A673 (cell line): ENCODE measurements at regions of chr4 and their contacts with region 1.

Region 1: DNA sequence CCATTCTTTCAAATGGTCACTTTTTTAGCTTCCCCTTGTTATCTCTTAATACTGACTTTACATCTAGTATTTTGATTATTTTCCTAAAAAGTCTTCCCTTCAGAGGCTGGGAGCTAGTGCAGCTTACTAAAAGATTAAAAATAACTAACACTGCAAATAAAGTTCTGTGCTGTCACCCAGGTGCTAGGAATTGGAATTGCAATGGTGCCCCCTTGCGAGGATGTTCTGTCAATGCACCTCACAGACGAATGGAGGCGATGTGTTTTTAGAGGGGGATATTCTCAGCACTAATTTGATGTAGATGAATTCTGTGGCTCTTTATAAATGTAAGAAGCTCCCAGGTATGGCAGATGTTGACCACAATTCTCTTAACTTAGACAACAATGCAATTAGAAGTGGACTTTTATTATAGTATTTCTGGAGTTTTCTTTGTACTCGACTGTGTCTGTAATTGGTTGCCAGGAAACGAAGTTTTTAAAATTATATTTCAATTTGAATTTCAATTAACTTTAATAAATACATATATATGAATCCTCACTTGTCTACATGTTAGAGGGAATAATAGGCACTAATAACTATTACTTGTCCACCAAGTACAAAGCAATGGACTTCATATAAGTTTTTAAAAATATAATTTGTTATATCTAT is 22.0 kb upstream of the SMIM31 start:
- DNase-seq: peak; percentile 85
- H3K4me3 ChIP-seq: no peak overlapping the region
- H3K27ac ChIP-seq: peak overlapping the region; percentile 34
- H3K4me1 ChIP-seq: peaks cover 25% of the 10 kb centered on the region
- H3K27me3 ChIP-seq: no peaks in the 10 kb centered on the region
- CTCF ChIP-seq: peak; percentile 93

Region 2: DNA sequence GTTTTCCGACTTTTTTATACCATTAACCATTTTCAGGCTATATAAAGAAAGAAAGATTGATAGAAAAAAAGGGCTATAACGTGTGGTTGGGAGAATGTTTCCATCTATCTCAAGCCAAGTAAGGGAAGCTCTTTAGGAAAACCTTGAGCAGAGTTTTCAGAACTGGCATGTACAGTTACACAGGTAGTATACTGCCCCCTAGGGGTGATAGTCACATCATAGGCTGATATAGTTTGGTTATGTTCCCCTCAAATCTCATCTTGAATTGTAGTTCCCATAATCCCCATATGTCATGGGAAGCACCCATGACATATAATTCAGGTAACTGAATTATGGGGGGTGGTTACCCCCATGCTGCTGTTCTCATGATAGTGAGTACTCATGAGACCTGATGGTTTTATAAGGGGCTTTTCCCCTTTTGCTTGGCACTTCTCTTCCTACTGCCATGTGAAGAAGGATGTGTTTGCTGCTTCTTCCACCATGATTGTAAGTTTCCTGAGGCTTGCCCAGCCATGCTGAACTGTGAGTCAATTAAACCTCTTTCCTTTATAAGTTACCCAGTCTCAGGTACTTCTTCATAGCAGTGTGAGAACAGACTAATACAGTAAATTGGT is 1050.6 kb before region 1 on chr4:
- CTCF ChIA-PET with region 1: no interaction called
- POLR2A ChIA-PET with region 1: no interaction called
- intact Hi-C with region 1: loop called (anchors 10 kb)
- DNase-seq: peak; percentile 70
- H3K4me3 ChIP-seq: no peak overlapping the region
- H3K27ac ChIP-seq: no peak overlapping the region
- H3K4me1 ChIP-seq: no peaks in the 10 kb centered on the region
- H3K27me3 ChIP-seq: no peaks in the 10 kb centered on the region
- CTCF ChIP-seq: peak; percentile 69

Region 3: DNA sequence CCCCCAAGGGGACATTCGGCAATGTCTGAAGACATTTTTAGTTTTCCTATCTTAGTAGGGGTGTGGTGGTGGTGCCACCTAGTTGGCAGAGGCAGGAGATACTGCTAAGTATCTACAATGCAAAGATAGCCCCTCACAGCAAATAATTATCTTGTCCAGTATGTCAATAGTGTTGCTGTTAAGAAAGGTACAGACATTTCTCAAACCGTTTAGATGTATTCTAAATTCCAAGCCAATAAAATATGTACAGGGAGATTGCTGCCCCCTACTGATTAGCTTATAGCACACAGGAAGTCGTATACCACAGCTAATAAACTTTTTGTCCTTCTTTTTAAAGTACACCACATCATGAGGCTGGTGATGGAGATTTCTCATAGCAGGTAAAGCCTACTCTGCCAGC is 976.9 kb before region 1 on chr4:
- CTCF ChIA-PET with region 1: interaction called, 6 read pairs
- POLR2A ChIA-PET with region 1: no interaction called
- intact Hi-C with region 1: loop called (anchors 10 kb)
- DNase-seq: peak; percentile 81
- H3K4me3 ChIP-seq: no peak overlapping the region
- H3K27ac ChIP-seq: no peak overlapping the region
- H3K4me1 ChIP-seq: peaks cover 11% of the 10 kb centered on the region
- H3K27me3 ChIP-seq: no peaks in the 10 kb centered on the region
- CTCF ChIP-seq: peak; percentile 70

Region 4: GRCh38 chr4:164012396-164013027 is 719.4 kb before region 1 on chr4:
- CTCF ChIA-PET with region 1: no interaction called
- POLR2A ChIA-PET with region 1: no interaction called
- intact Hi-C with region 1: loop called (anchors 5 kb)
- DNase-seq: peak; percentile 82
- H3K4me3 ChIP-seq: no peak overlapping the region
- H3K27ac ChIP-seq: peak overlapping the region; percentile 8
- H3K4me1 ChIP-seq: peaks cover 7% of the 10 kb centered on the region
- H3K27me3 ChIP-seq: no peaks in the 10 kb centered on the region
- CTCF ChIP-seq: peak; percentile 82

Region 5: DNA sequence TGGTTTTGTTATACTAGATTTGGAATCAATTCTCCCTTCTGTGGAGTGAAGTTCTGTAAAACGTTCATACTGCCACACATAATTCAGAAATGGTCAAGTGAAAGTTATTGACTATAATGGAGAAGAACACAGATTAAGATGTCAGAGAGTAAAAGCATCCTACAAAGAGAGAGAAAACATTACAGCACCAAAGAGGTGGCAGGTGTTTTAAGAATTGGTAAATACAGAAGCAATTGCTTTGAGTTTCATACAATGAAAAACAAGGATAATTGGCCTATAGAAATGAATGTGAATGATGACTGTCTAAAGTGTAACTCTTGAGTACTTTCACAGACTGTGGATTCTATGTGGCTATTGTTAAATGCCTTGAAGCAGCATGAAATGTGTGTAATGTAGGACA is 413.6 kb before region 1 on chr4:
- CTCF ChIA-PET with region 1: interaction called, 3 read pairs
- POLR2A ChIA-PET with region 1: no interaction called
- intact Hi-C with region 1: loop called (anchors 5 kb)
- DNase-seq: no peak
- H3K4me3 ChIP-seq: no peak overlapping the region
- H3K27ac ChIP-seq: no peak overlapping the region
- H3K4me1 ChIP-seq: peaks cover 11% of the 10 kb centered on the region
- H3K27me3 ChIP-seq: no peaks in the 10 kb centered on the region
- CTCF ChIP-seq: no peak

Region 6: DNA sequence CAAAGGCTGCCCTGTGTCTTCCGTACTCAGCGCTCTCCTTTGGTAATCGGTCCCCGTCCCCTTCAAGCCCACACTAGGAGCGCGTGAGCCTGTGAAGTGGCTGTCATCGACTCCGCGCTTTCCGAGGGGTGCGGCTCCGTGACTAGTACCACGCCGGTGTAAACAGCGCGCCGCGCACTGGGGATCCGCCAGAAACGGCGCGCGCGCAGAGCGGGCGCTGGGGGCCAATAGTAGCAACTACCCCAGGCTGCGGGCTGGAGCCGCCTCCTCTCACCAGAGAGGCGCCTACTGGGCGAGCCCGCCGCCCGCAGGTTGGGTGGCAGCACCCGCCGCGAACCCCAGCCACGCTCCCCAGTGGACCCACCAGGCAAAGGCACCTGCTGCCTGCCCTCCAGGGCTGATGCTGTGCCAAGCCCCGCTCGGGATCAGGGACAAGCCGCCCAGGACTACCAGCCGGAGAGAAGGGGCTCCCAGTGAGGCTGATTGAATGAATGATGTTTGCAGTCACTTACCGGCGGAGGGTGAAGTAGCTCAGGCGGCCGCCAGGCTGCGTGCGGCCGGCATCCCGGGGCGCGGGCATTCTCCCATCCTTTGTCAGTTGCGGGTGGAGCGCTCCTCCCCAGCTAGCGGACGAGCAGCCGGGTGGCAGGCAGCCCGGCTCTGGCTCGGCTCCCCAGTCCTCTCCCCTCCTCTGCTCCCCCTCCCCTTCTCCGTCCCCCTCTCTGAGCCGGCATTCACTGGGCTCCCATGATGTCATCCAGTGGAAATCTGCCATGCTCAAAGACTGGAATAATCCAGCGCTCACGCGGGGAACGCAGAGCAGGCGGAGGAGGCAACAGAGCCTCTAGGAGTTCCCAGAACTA is 348.4 kb before region 1 on chr4:
- CTCF ChIA-PET with region 1: no interaction called
- POLR2A ChIA-PET with region 1: no interaction called
- intact Hi-C with region 1: loop called (anchors 10 kb)
- DNase-seq: peak; percentile 89
- H3K4me3 ChIP-seq: peak overlapping the region; percentile 75
- H3K27ac ChIP-seq: peak overlapping the region; percentile 59
- H3K4me1 ChIP-seq: peaks cover 4% of the 10 kb centered on the region
- H3K27me3 ChIP-seq: no peaks in the 10 kb centered on the region
- CTCF ChIP-seq: peak; percentile 55

Region 7: DNA sequence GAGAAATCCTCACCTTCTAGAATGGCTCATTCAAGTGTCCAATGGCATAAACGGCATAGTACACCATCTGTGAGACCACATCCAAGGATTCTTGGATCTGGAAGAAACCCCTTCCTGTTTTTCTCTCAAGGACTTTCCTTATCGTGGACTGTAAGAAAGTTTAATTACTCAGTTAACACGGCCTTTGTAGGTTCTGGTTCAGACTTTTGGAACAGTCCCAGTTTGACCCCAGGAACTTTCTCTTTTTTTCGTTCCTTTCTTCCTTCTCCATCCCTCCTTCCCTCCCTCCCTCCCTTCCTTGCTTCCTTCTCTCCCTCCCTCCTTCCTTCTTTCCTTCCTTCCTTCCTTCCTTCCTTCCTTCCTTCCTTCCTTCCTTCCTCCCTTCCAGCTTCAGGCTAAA is 321.6 kb before region 1 on chr4:
- CTCF ChIA-PET with region 1: interaction called, 3 read pairs
- POLR2A ChIA-PET with region 1: no interaction called
- intact Hi-C with region 1: loop called (anchors 2 kb)
- DNase-seq: peak; percentile 80
- H3K4me3 ChIP-seq: no peak overlapping the region
- H3K27ac ChIP-seq: peak overlapping the region; percentile 84
- H3K4me1 ChIP-seq: peaks cover 13% of the 10 kb centered on the region
- H3K27me3 ChIP-seq: no peaks in the 10 kb centered on the region
- CTCF ChIP-seq: no peak

Region 8: GRCh38 chr4:164536814-164537213 is 195.1 kb before region 1 on chr4:
- CTCF ChIA-PET with region 1: no interaction called
- POLR2A ChIA-PET with region 1: no interaction called
- intact Hi-C with region 1: no loop called
- DNase-seq: peak; percentile 27
- H3K4me3 ChIP-seq: no peak overlapping the region
- H3K27ac ChIP-seq: no peak overlapping the region
- H3K4me1 ChIP-seq: no peaks in the 10 kb centered on the region
- H3K27me3 ChIP-seq: no peaks in the 10 kb centered on the region
- CTCF ChIP-seq: no peak

Region 9: DNA sequence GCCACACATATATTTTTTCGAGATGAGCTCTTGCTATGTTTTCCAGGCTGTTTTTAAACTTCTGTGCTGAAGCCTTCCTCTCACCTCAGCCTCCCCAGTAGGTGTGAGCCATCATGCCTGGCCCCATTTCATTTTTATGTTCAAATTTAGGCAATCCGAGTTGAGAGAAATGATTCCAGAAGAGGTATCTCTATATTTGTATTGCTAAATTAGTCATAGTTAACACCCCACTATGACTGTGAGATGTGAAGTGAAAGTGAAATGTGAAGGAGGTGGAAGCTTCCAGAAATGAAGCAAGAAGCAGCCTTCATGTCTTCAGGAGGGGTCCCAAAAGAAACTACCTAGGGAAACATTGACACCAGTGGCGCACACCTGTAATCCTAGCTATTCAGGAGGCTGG is 162.8 kb after region 1 on chr4:
- CTCF ChIA-PET with region 1: no interaction called
- POLR2A ChIA-PET with region 1: no interaction called
- intact Hi-C with region 1: no loop called
- DNase-seq: no peak
- H3K4me3 ChIP-seq: no peak overlapping the region
- H3K27ac ChIP-seq: no peak overlapping the region
- H3K4me1 ChIP-seq: no peaks in the 10 kb centered on the region
- H3K27me3 ChIP-seq: no peaks in the 10 kb centered on the region
- CTCF ChIP-seq: no peak

Region 10: DNA sequence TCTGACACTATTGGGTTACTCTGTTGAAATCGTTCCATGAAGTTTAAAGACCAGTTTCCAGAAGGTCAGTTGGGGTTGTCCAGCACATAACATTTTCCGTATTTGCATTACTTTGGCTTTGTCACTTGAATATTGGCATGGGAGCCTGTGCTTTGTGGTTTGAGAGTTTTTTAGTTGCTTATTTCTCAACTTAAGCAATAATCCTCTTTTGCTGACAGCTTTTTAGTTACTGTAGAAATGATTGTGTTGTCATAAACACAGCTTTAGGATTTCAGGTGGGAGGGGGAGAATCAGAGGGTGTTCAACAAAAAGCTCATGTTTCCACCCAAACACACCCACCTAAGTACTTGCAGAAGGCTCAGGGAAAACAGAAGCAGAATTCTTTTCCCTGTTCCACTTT is 930.4 kb after region 1 on chr4:
- CTCF ChIA-PET with region 1: no interaction called
- POLR2A ChIA-PET with region 1: no interaction called
- intact Hi-C with region 1: no loop called
- DNase-seq: no peak
- H3K4me3 ChIP-seq: no peak overlapping the region
- H3K27ac ChIP-seq: no peak overlapping the region
- H3K4me1 ChIP-seq: peaks cover 11% of the 10 kb centered on the region
- H3K27me3 ChIP-seq: no peaks in the 10 kb centered on the region
- CTCF ChIP-seq: no peak